Right ventricle myocardium superior (tissue), 1 donor: ENCODE measurements at regions of chr16 and their contacts with region 1.

Region 1: DNA sequence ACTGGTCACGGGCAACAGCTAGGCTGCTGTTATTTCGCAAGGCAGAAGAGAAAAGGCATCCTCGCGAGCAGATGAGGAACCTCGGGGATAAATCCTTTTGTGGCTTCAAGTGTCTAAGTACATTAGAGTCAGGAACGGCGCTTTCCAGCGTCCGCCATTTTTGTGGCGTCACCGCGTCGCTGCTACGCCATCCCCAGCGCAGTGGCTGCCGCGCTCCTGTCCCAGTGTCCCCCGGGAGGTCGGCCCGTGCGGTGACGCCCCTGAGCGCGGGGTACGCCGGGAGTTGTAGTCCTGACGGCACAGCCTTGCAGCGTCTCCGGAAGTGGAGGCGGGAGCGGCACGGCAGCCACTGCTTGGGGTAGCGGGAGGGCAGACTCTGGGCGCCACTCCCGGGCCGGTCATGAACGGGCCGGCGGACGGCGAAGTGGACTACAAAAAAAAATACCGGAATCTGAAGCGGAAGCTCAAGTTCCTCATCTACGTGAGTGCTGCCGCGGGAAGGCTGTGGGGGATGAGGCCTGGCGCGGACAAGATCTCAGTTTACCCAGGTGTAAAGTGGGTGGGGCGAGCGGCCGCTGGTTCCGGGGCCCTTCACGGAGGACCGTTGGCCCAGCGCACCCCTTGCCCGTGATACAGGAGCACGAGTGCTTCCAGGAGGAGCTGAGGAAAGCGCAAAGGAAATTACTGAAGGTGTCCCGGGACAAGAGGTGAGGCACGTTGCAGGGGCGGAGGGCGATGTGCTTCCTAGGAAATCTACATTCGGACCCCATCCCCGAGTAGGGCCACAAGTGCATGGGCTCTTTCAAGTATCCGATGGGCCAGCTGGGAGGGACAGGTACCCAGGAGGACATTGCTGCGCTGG is at the start of gene INO80E:
- DNase-seq: peak; percentile 99
- ATAC-seq: peak; percentile 99
- total RNA-seq, gene INO80E: 28.0 TPM

Region 2: DNA sequence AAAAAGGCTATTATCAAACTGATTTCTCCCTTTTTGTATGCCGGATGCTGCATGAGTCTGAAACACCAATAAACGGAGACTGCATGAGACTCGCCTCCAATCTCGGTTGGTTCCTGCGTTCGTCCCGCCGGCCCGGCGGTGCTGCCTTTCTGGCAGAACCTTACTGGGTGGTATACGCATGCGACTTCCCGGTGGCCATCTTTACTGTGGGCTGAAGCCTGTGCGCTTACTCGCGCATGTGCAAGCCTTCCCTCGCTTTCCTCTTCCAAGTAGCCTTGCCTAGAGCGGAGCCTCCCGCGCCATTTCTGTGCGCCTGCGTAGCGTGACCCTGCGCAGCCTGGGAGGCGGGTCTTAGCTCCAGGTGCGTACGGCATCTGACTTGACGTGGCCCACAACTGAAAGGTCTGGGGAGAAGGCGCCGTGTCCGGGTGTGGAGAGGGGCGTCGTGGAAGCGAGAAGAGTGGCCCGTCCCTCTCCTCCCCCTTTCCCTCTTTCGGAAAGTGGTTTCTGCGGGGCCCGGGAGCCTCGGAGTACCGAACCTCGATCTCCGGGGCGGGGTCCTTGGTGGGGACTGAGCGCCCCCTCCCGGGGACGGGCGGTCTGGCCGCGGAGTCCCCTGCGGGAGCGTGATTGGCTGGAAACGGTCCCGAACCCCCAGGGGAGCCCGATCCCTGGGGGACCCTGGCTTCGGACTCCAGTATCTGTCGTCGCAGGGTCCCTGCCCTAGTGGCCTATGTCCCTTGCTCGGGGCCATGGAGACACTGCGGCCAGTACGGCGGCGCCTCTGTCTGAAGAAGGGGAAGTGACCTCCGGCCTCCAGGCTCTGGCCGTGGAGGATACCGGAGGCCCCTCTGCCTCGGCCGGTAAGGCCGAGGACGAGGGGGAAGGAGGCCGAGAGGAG is 180.1 kb before region 1 on chr16 and contains the start of gene PAGR1:
- intact Hi-C with region 1: loop called (anchors 10 kb)
- DNase-seq: peak; percentile 99
- ATAC-seq: peak; percentile 82
- total RNA-seq, gene PAGR1: 14.7 TPM